Activated naive CD4-positive, alpha-beta T cell treated with anti-CD3 and anti-CD28 coated beads for 36 hours (primary cell): ENCODE measurements at regions of chr9 and their contacts with region 1.

Region 1: DNA sequence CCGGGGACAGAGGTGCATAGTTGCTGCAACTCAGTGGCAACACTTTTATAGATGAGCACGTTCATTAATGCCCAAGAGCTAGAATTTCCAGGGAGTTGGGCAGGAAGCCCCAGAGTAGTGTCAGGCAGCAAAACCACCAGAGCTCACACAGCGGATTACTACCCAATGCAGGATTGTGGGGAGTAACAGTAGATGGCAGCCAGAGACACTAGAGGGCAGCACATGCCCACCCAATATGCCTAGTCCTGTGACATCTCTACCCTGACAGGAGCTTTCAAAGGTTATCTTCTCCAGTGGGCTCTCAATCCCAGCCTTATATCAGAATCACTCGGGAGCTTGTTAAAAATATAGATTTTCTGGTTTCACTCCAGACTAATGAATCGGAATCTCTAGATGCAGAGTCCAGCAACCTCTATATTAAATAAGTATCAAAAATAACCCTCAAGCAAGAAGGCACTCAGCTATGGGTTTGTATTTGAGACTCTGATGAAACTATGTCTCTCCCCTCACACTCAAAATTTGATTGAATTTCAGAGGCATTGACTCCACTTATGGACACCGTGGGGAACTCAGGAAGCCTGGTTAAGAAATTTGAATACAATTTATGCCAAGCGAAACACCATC is 58.4 kb upstream of the PHF24 start:
- DNase-seq: peak; percentile 91
- H3K4me3 Mint-ChIP-seq: no peak overlapping the region
- H3K27ac Mint-ChIP-seq: no peak overlapping the region
- H3K4me1 Mint-ChIP-seq: no peaks in the 10 kb centered on the region
- H3K27me3 Mint-ChIP-seq: peaks cover 22% of the 10 kb centered on the region

Region 2: DNA sequence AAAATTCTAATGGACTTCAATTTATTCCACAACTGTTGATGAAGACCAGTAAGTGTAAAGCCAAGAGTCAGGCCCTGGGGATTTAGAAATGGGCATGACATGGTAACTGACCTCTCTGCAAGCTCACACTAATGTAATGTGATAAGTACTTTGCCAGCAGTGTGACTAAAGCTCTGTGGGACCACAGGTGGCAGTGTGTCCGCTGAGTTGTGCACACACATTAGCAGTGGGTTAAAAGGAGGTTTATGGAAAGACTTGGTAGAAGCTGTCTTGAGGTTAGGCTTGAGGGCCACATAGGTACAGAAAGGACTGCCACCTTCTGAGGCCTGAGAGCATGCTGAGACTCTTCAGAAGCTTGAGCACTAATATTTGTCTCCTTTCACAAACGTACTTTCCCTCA is 653.2 kb before region 1 on chr9:
- CTCF ChIA-PET with region 1: no interaction called
- intact Hi-C with region 1: no loop called
- DNase-seq: no peak
- H3K4me3 Mint-ChIP-seq: no peak overlapping the region
- H3K27ac Mint-ChIP-seq: peak overlapping the region; percentile 18
- H3K4me1 Mint-ChIP-seq: peaks cover 10% of the 10 kb centered on the region
- H3K27me3 Mint-ChIP-seq: no peaks in the 10 kb centered on the region

Region 3: GRCh38 chr9:34723141-34723540 is 176.5 kb before region 1 on chr9:
- CTCF ChIA-PET with region 1: no interaction called
- intact Hi-C with region 1: no loop called
- DNase-seq: no peak
- H3K4me3 Mint-ChIP-seq: no peak overlapping the region
- H3K27ac Mint-ChIP-seq: no peak overlapping the region
- H3K4me1 Mint-ChIP-seq: no peaks in the 10 kb centered on the region
- H3K27me3 Mint-ChIP-seq: no peaks in the 10 kb centered on the region

Region 4: DNA sequence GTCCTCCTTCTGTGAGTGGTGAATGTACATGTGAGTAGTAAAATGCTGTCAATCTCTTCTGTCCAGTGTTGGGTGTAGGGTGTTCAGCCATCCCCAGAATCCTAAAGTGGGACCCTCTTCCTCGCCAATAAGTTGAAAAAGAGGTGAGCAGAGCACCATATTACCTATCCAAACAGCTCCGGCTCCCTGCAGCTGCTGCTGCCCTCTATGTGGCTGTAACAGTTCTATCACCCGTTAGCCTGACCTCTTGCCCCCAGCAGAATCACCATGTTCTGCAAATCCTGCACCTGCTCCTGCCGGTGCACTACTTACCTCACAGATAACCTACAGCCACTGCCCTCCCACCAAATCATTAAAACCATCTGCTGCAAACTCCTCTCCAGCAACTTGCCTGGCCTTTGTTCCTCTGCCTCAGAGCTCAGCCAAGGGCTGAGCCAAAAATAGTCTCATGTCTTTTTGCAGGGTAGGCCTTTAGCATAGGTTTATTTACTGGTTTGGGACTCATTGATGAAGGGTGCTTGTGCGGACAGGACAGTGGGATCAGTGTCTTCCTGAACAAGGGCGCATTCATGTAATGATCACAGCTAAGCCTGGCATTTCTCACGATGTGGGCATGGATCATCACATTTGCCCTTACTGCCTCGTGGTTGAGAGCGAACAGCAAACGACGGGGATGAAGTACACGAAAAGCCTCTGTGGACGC is 140.1 kb before region 1 on chr9:
- CTCF ChIA-PET with region 1: interaction called, 6 read pairs
- intact Hi-C with region 1: loop called (anchors 2 kb)
- DNase-seq: no peak
- H3K4me3 Mint-ChIP-seq: no peak overlapping the region
- H3K27ac Mint-ChIP-seq: no peak overlapping the region
- H3K4me1 Mint-ChIP-seq: peaks cover 2% of the 10 kb centered on the region
- H3K27me3 Mint-ChIP-seq: peaks cover 32% of the 10 kb centered on the region

Region 5: GRCh38 chr9:34994260-34994899 is 94.7 kb after region 1 on chr9:
- CTCF ChIA-PET with region 1: interaction called, 24 read pairs
- intact Hi-C with region 1: no loop called
- DNase-seq: no peak
- H3K4me3 Mint-ChIP-seq: peak overlapping the region; percentile 0
- H3K27ac Mint-ChIP-seq: no peak overlapping the region
- H3K4me1 Mint-ChIP-seq: peaks cover 56% of the 10 kb centered on the region
- H3K27me3 Mint-ChIP-seq: no peaks in the 10 kb centered on the region

Region 6: DNA sequence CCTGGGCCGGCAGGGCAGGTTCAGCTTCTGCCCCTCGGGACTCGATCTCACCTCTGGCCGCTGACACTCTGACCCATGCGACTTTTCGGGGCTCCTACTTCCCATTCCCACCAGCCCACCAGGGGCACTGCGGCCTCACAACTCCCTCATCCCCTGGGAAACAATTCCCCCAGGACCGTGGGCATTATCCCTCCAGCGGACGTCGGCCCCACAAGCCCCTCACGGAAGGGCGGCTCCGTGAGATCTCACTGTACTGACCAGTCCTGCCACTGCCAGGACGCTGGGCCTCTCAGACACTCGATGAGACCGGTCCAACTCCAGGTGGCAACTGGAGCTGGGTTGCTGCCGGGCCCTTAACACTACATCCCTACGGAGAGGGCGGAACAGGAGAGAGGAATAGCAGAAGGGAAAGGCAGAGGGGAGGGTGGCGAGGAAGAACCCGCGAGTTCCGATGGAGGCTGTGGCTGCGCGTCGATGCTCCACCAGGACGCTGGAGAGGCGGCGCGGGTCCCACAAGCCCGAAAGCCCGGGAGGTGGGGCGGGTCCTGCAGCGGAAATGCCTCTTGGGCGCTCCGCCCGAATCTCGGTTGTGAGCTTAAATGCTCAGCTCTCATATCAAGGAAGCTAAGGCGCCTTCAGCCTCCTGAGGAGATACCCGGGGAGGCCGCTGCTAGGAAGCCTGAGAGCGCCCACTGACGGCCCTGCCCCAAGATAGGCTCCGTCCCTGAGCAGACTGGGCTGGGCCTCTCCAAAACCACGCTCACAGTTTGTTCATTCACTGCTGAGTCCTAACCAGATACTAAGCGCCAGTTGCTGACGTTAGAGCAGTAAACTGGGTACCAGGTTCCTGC is 136.4 kb after region 1 on chr9:
- CTCF ChIA-PET with region 1: interaction called, 4 read pairs
- intact Hi-C with region 1: loop called (anchors 1 kb)
- DNase-seq: peak; percentile 70
- H3K4me3 Mint-ChIP-seq: peak overlapping the region; percentile 37
- H3K27ac Mint-ChIP-seq: peak overlapping the region; percentile 31
- H3K4me1 Mint-ChIP-seq: peaks cover 8% of the 10 kb centered on the region
- H3K27me3 Mint-ChIP-seq: no peaks in the 10 kb centered on the region

Region 7: GRCh38 chr9:35071814-35072460 is 172.3 kb after region 1 on chr9:
- CTCF ChIA-PET with region 1: interaction called, 11 read pairs
- intact Hi-C with region 1: no loop called
- DNase-seq: peak; percentile 77
- H3K4me3 Mint-ChIP-seq: peak overlapping the region; percentile 92
- H3K27ac Mint-ChIP-seq: peak overlapping the region; percentile 96
- H3K4me1 Mint-ChIP-seq: peaks cover 57% of the 10 kb centered on the region
- H3K27me3 Mint-ChIP-seq: no peaks in the 10 kb centered on the region

Region 8: DNA sequence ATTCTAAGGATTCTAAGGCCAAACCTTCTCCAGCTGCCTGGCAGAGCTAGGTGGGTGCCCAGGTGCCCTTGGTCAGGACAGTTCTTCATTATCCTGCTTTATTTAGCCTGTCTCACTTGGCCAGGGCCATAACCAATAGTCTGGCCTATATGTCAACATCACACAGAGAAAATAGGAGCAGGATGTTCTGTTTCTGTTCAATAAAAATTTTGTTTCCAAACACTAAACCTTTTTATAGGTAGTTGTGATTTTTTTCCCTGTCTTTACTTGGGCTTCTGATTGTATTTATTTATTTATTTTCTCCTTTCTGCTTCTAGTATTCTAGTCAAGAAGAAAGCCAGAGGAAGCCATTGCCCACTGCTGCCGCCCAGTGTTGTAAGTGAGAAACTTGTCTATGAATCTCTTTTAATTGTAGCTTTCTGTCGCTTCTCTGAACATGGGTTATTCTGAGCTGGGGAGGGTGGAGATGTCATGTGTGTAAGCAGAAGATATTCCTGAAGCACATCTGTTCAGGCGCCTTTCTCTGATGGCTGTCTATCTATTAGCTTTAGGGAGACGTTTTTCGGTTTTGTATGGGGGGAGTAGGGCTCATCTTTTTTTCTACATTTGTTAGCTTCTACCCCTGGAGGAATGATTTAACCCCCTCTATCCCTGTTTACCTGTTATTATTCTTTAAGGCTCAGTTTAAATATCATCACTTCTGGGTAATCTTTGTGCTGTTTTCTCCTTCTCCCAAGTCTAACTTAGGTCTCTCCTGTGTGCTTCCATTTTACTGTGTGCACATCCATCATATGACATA is 359.2 kb after region 1 on chr9:
- CTCF ChIA-PET with region 1: interaction called, 6 read pairs
- intact Hi-C with region 1: loop called (anchors 2 kb)
- DNase-seq: peak; percentile 68
- H3K4me3 Mint-ChIP-seq: no peak overlapping the region
- H3K27ac Mint-ChIP-seq: no peak overlapping the region
- H3K4me1 Mint-ChIP-seq: no peaks in the 10 kb centered on the region
- H3K27me3 Mint-ChIP-seq: no peaks in the 10 kb centered on the region

Region 9: DNA sequence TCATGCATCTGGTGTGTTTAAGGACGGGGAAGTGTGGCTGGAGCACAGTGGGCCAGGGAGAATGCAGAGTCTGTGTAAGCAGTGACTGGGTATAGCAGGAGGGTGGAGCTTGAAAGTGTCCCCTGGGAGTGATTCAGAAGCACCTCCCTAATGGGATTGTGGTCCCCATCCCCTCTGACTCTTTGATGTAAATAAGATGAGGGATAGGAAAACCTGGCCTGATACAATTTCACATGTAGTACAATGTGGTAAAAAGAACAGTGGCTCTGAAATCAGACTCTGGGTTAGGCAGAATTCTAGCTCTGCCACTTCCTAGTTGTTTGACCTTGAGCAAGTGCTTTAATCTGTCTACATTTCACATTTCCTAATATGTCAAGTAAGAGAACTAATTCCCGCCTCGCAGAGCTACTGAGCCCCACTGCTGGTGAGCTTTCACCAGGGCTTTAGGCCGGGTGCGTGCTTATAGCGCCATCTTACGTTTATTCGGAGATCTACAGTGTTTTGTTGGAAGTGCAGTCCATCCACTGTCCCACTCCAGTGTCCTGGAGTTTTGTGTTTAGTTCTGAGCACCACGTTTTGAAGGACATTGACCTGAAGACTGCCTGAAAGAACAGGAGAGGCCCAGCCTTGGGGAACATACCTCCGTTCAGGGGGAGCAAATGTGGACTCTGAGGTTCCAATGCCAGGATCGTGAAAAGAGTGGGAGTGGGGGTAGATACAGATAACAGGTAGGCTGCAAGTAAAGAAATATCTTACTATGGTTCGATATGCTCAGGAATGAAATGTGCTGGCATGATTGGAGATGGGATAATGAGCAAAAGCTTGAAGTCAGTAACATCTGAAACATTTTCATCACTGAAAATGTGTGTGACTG is 654.3 kb after region 1 on chr9:
- CTCF ChIA-PET with region 1: no interaction called
- intact Hi-C with region 1: loop called (anchors 2 kb)
- DNase-seq: peak; percentile 71
- H3K4me3 Mint-ChIP-seq: no peak overlapping the region
- H3K27ac Mint-ChIP-seq: no peak overlapping the region
- H3K4me1 Mint-ChIP-seq: no peaks in the 10 kb centered on the region
- H3K27me3 Mint-ChIP-seq: no peaks in the 10 kb centered on the region